H1 (cell line): ENCODE measurements at regions of chr17 and their contacts with region 1.

Region 1: DNA sequence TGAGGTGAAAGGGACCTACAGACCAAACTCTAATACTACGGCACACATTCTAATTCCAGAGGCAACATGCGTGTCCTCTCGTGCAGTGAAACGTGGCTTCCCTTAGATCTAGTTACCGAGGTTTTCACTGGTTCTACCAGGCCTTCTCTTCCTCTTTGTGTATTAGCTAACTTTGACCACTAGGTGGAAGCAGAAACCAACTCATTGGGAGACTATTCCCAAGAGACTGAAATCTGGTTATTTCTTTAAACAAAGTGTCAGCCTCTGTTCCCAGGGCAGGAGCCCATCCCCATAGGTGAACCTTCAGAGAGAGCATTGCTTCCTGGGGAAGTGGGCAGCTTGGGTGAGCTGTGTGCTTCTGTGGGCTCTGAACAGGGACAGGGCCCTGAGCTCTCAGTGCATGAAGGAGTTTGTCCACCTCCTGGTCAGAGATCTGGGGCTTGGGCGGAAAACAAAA is 19.7 kb upstream of the RCVRN start:
- DNase-seq: no peak
- H3K4me3 ChIP-seq: no peak overlapping the region
- H3K27ac ChIP-seq: no peak overlapping the region
- H3K4me1 ChIP-seq: peaks cover 0 to 4% (median 0%) of the 10 kb centered on the region in 4 experiments; a peak in 1 of 7 replicates
- H3K27me3 ChIP-seq: no peaks in the 10 kb centered on the region
- CTCF ChIP-seq: peak in 2 of 3 experiments; percentile 79 to 84; a peak in 3 of 4 replicates
- EP300 ChIP-seq: no peak
- POLR2A ChIP-seq: no peak
- RAD21 ChIP-seq: peak; percentile 93 to 96

Region 2: DNA sequence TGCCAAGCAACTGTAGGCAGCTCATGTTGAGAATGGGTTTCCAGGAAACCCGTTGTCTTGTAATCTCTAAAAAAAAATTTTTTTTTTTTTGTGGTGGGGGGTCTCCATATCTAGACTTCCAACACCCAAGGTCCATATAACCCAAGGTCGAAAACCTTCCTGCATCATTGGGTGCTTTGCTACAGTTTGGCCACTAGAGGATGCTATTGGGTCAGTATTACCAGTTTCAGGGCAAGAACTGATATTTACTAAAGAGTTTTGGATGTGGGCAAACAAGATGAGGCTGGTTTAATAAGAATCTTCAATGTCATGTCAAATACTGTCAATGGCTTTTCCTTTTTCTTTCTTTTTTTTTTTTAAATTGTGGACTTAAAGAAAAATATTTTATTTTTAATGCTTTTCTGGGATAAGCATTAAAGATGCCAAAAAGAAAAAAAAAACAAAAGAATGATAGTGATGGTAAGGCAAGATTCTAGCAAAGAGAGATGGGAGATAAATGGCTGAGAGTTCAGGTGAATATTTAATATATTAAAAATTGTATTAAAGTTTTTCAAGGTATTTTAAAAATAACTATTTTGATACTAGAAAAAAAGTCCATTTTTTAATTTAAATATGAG is 195.6 kb before region 1 on chr17:
- CTCF ChIA-PET with region 1: interaction called, 11 read pairs
- POLR2A ChIA-PET with region 1: no interaction called
- DNase-seq: no peak
- H3K4me3 ChIP-seq: no peak overlapping the region
- H3K27ac ChIP-seq: no peak overlapping the region
- H3K4me1 ChIP-seq: no peaks in the 10 kb centered on the region
- H3K27me3 ChIP-seq: no peaks in the 10 kb centered on the region
- CTCF ChIP-seq: peak in 2 of 3 experiments; percentile 89 to 92; a peak in 3 of 4 replicates
- EP300 ChIP-seq: no peak
- POLR2A ChIP-seq: no peak
- RAD21 ChIP-seq: peak; percentile 91 to 93

Region 3: GRCh38 chr17:9905902-9906301 is 18.9 kb before region 1 on chr17:
- CTCF ChIA-PET with region 1: interaction called, 49 read pairs
- POLR2A ChIA-PET with region 1: no interaction called
- DNase-seq: peak in 1 of 2 experiments; percentile 82
- H3K4me3 ChIP-seq: no peak overlapping the region
- H3K27ac ChIP-seq: no peak overlapping the region
- H3K4me1 ChIP-seq: peaks cover 0 to 4% (median 2%) of the 10 kb centered on the region in 4 experiments; a peak in 3 of 7 replicates
- H3K27me3 ChIP-seq: no peaks in the 10 kb centered on the region; a peak in 1 of 7 replicates
- CTCF ChIP-seq: peak; percentile 69 to 90 (median 86)
- EP300 ChIP-seq: no peak
- POLR2A ChIP-seq: no peak
- RAD21 ChIP-seq: peak; percentile 63 to 67

Region 4: GRCh38 chr17:9935408-9935807 is 10.6 kb after region 1 on chr17:
- CTCF ChIA-PET with region 1: interaction called, 75 read pairs
- POLR2A ChIA-PET with region 1: no interaction called
- DNase-seq: no peak
- H3K4me3 ChIP-seq: no peak overlapping the region
- H3K27ac ChIP-seq: no peak overlapping the region
- H3K4me1 ChIP-seq: peaks cover 0 to 5% (median 0%) of the 10 kb centered on the region in 4 experiments; a peak in 2 of 7 replicates
- H3K27me3 ChIP-seq: no peaks in the 10 kb centered on the region
- CTCF ChIP-seq: no peak
- EP300 ChIP-seq: no peak
- POLR2A ChIP-seq: no peak
- RAD21 ChIP-seq: no peak

Region 5: DNA sequence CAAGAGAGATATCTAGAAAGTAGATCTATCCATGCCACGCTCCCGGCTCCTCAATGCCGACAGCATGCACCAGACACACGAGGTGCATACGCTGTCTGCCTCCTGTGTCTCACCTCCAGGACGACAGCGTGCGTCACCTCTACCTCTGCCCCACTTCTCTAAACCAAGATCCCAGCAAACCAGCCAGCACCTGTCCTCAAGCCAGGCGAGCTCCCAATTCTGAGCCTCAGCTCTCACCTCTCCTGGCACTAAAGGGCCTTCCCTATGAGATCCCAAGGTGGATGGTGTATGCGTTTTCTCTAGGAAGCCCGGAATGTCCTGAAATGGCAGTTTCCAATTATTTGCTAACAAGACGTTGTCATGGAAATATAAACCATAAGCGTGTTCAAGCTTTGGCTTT is 16.5 kb after region 1 on chr17:
- CTCF ChIA-PET with region 1: interaction called, 75 read pairs
- POLR2A ChIA-PET with region 1: no interaction called
- DNase-seq: no peak
- H3K4me3 ChIP-seq: no peak overlapping the region
- H3K27ac ChIP-seq: no peak overlapping the region
- H3K4me1 ChIP-seq: no peaks in the 10 kb centered on the region
- H3K27me3 ChIP-seq: no peaks in the 10 kb centered on the region
- CTCF ChIP-seq: no peak
- EP300 ChIP-seq: no peak
- POLR2A ChIP-seq: no peak
- RAD21 ChIP-seq: no peak

Region 6: DNA sequence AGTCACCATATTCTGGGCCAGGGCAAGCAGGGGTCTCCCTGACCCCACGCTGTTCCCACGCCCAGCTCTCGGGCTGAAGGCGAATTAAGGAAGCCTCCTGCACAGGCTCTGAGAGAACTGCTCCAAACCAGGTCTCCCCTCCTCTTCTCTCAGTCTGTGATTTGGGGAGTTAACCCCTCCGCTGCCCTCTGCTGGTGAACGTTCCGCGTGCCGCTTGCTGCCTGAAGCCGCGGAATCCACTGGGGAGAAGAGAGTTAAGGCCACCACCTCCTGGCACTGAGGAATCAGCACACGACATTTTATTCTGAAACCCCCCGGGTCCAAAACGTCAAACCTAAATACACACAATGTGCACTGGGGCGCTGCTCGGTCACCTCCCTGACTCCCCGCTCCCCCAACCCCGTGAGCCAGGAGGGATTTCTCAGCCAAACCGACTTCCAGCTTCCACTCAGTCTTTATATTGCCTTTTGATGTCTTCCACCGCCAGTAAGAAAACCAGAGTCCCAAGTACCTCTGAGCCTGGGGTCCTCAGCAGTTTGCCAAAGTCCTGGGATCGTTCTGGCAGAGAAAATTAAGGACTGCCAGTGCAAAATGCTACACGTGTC is 34.7 kb after region 1 on chr17:
- CTCF ChIA-PET with region 1: interaction called, 130 read pairs
- POLR2A ChIA-PET with region 1: interaction called, 3 read pairs
- DNase-seq: peak; percentile 47 to 89
- H3K4me3 ChIP-seq: peak overlapping the region in 3 of 4 experiments; percentile 11 to 49 (median 29); a peak in 5 of 8 replicates
- H3K27ac ChIP-seq: no peak overlapping the region
- H3K4me1 ChIP-seq: peaks cover 10 to 26% (median 15%) of the 10 kb centered on the region in 4 experiments
- H3K27me3 ChIP-seq: peaks cover 0 to 2% (median 0%) of the 10 kb centered on the region in 4 experiments; a peak in 4 of 7 replicates
- CTCF ChIP-seq: peak; percentile 83 to 85 (median 84)
- EP300 ChIP-seq: no peak
- POLR2A ChIP-seq: no peak
- RAD21 ChIP-seq: peak; percentile 50 to 69

Region 7: DNA sequence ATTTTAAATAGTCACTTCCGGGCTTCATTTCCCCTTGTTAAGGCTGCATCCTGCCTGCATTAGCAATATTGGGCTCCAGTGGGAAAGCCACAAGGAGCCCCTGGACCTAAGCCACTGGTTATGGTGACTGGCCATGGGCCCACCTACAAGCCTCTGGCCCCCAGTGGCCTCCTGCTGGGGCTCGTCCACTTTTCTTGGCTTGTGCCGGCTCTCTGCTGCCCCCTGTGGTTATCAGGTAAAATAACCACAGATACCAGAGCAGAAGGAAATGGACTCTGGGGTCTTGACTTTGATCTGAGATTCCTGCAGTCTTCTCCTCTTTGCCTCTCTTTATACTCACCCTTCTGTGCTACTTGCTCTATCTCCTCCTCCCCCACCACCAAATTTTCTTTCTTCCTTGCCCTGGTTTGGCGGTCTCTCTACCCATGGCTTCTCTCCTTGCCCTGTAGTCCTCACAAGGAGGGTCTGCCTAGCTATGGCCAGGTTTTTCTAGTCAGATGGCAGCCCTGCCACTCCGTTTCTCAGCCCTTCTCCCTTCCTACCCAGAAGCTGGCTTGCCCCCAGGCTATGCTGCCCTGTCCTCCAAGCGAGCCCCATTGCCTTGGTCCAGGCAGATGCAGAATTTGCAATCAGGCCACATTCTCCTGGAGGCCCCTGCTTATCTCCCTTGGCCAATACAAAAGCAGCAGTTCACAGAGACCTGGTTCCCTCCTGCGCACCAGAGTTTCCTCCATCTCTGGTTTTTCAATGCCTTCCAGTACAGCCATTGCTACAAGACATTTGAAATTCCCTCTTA is 63.2 kb after region 1 on chr17:
- CTCF ChIA-PET with region 1: interaction called, 118 read pairs
- POLR2A ChIA-PET with region 1: no interaction called
- DNase-seq: peak in 1 of 2 experiments; percentile 72
- H3K4me3 ChIP-seq: no peak overlapping the region
- H3K27ac ChIP-seq: no peak overlapping the region
- H3K4me1 ChIP-seq: no peaks in the 10 kb centered on the region
- H3K27me3 ChIP-seq: no peaks in the 10 kb centered on the region
- CTCF ChIP-seq: peak; percentile 60 to 79 (median 66)
- EP300 ChIP-seq: no peak
- POLR2A ChIP-seq: no peak
- RAD21 ChIP-seq: peak; percentile 39 to 61